CD8-positive, alpha-beta memory T cell (primary cell): ENCODE measurements at regions of chr1 and their contacts with region 1.

Region 1: GRCh38 chr1:45303582-45304310 is 22.9 kb upstream of the HPDL start:
- DNase-seq: peak; percentile 93 to 98 (median 96)
- H3K4me3 ChIP-seq: peak overlapping the region; percentile 63
- H3K4me3 Mint-ChIP-seq: peak overlapping the region; percentile 90 to 97 (median 91)
- H3K27ac ChIP-seq: peak overlapping the region; percentile 88
- H3K27ac Mint-ChIP-seq: peak overlapping the region; percentile 94 to 99 (median 97)
- H3K4me1 ChIP-seq: peaks cover 8% of the 10 kb centered on the region
- H3K4me1 Mint-ChIP-seq: peaks cover 15 to 37% (median 30%) of the 10 kb centered on the region in 3 donors
- H3K27me3 ChIP-seq: no peaks in the 10 kb centered on the region
- H3K27me3 Mint-ChIP-seq: peaks cover 0 to 3% of the 10 kb centered on the region in 2 donors

Region 2: GRCh38 chr1:45018599-45019230 is 285.0 kb before region 1 on chr1:
- CTCF ChIA-PET with region 1: interaction called, 173 read pairs
- POLR2A ChIA-PET with region 1: interaction called, 8 read pairs
- DNase-seq: peak; percentile 20 to 69 (median 27)
- H3K4me3 ChIP-seq: no peak overlapping the region
- H3K4me3 Mint-ChIP-seq: no peak overlapping the region
- H3K27ac ChIP-seq: no peak overlapping the region
- H3K27ac Mint-ChIP-seq: peak overlapping the region in 1 of 8 donors; percentile 63
- H3K4me1 ChIP-seq: no peaks in the 10 kb centered on the region
- H3K4me1 Mint-ChIP-seq: peaks cover 7 to 15% (median 13%) of the 10 kb centered on the region in 3 donors
- H3K27me3 ChIP-seq: no peaks in the 10 kb centered on the region
- H3K27me3 Mint-ChIP-seq: peaks cover 0 to 2% of the 10 kb centered on the region in 2 donors

Region 3: DNA sequence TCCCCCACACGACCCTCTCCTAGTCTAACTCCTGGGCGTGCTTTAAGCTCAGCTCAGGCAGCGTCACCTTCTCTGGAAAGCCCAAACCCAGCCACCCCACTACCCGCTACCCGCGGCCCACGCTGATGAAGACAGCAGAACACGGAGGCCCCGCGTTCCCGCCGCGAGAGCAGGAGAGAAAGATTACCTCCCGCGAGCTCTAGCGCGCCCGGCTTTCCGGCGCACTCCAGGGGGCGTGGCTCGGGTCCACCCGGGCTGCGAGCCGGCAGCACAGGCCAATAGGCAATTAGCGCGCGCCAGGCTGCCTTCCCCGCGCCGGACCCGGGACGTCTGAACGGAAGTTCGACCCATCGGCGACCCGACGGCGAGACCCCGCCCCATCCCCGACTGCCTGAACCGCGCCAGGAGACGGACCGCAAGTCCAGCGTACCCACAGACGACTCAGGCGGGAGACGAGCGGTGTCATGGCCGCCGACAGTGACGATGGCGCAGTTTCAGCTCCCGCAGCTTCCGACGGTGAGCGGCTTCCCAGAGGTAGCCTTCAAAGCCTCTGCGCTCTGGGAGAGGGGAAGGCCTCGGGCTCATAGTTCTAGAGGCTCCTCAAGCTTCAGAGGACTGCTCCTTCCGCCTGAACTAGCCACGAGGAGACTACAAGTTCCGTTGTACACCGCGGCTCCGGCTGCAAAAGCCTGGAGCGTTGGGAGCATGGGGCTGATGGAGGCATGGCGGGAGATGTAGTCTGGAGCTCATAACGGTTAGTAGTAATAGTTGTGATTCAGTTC is 36.2 kb after region 1 on chr1 and contains the starts of genes MUTYH and TOE1:
- CTCF ChIA-PET with region 1: interaction called, 33 read pairs
- POLR2A ChIA-PET with region 1: interaction called, 50 read pairs
- DNase-seq: peak; percentile 84 to 92 (median 89)
- H3K4me3 ChIP-seq: peak within 1 kb of the TSS; percentile 99
- H3K4me3 Mint-ChIP-seq: peak within 1 kb of the TSS; percentile 99 to 100 (median 100)
- H3K27ac ChIP-seq: peak within 1 kb of the TSS; percentile 99
- H3K27ac Mint-ChIP-seq: peak within 1 kb of the TSS; percentile 97 to 99 (median 99)
- H3K4me1 ChIP-seq: peaks cover 43% of the 10 kb centered on the region
- H3K4me1 Mint-ChIP-seq: peaks cover 48 to 68% (median 61%) of the 10 kb centered on the region in 3 donors
- H3K27me3 ChIP-seq: no peaks in the 10 kb centered on the region
- H3K27me3 Mint-ChIP-seq: no peaks in the 10 kb centered on the region
- total RNA-seq, gene MUTYH: 70.1 to 75.4 TPM
- total RNA-seq, gene TOE1: 46.4 to 48.9 TPM

Region 4: GRCh38 chr1:45470306-45470798 is 166.6 kb after region 1 on chr1:
- CTCF ChIA-PET with region 1: no interaction called
- POLR2A ChIA-PET with region 1: no interaction called
- DNase-seq: no peak
- H3K4me3 ChIP-seq: no peak overlapping the region
- H3K4me3 Mint-ChIP-seq: no peak overlapping the region
- H3K27ac ChIP-seq: no peak overlapping the region
- H3K27ac Mint-ChIP-seq: no peak overlapping the region
- H3K4me1 ChIP-seq: no peaks in the 10 kb centered on the region
- H3K4me1 Mint-ChIP-seq: no peaks in the 10 kb centered on the region
- H3K27me3 ChIP-seq: no peaks in the 10 kb centered on the region
- H3K27me3 Mint-ChIP-seq: no peaks in the 10 kb centered on the region

Region 5: GRCh38 chr1:45499415-45499769 is 195.6 kb after region 1 on chr1:
- CTCF ChIA-PET with region 1: interaction called, 19 read pairs
- POLR2A ChIA-PET with region 1: interaction called, 12 read pairs
- DNase-seq: no peak
- H3K4me3 ChIP-seq: peak overlapping the region; percentile 69
- H3K4me3 Mint-ChIP-seq: peak overlapping the region; percentile 93 to 97 (median 94)
- H3K27ac ChIP-seq: peak overlapping the region; percentile 59
- H3K27ac Mint-ChIP-seq: peak overlapping the region; percentile 71 to 97 (median 91)
- H3K4me1 ChIP-seq: peaks cover 15% of the 10 kb centered on the region
- H3K4me1 Mint-ChIP-seq: peaks cover 28 to 36% (median 35%) of the 10 kb centered on the region in 3 donors
- H3K27me3 ChIP-seq: no peaks in the 10 kb centered on the region
- H3K27me3 Mint-ChIP-seq: no peaks in the 10 kb centered on the region

Region 6: GRCh38 chr1:45583264-45583665 is 279.5 kb after region 1 on chr1:
- CTCF ChIA-PET with region 1: no interaction called
- POLR2A ChIA-PET with region 1: interaction called, 10 read pairs
- DNase-seq: peak; percentile 93 to 96 (median 94)
- H3K4me3 ChIP-seq: peak overlapping the region; percentile 95
- H3K4me3 Mint-ChIP-seq: peak overlapping the region; percentile 93 to 100 (median 99)
- H3K27ac ChIP-seq: peak overlapping the region; percentile 95
- H3K27ac Mint-ChIP-seq: peak overlapping the region; percentile 96 to 99 (median 99)
- H3K4me1 ChIP-seq: peaks cover 21% of the 10 kb centered on the region
- H3K4me1 Mint-ChIP-seq: peaks cover 31 to 34% (median 34%) of the 10 kb centered on the region in 3 donors
- H3K27me3 ChIP-seq: no peaks in the 10 kb centered on the region
- H3K27me3 Mint-ChIP-seq: peaks cover 0 to 2% of the 10 kb centered on the region in 2 donors

Region 7: DNA sequence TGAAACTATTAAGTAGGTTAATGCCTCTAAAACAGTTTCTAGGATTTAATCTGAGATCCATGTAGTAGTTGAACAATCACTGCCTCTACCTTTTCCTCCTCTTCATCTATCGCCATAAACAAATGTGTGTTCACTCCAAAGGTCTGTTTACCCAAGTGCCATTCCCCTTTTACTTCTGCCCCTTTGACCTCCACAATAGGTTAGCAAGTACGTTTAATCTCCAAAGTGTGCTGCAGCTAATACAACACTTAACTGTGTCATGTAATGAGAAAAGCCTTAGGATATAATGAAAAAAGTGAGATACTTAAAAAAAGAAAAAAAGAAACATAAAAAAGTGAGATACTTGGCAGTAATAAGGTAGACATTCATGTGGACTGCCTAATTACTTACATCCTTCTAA is 354.4 kb after region 1 on chr1:
- CTCF ChIA-PET with region 1: no interaction called
- POLR2A ChIA-PET with region 1: no interaction called
- DNase-seq: no peak
- H3K4me3 ChIP-seq: no peak overlapping the region
- H3K4me3 Mint-ChIP-seq: no peak overlapping the region
- H3K27ac ChIP-seq: no peak overlapping the region
- H3K27ac Mint-ChIP-seq: peak overlapping the region in 2 of 8 donors; percentile 1 to 44
- H3K4me1 ChIP-seq: no peaks in the 10 kb centered on the region
- H3K4me1 Mint-ChIP-seq: peaks cover 6 to 27% (median 14%) of the 10 kb centered on the region in 3 donors
- H3K27me3 ChIP-seq: no peaks in the 10 kb centered on the region
- H3K27me3 Mint-ChIP-seq: no peaks in the 10 kb centered on the region